AG04449 (cell line): ENCODE measurements at regions of chr12 and their contacts with region 1.

Region 1: GRCh38 chr12:2853626-2854025 is 3.2 kb downstream of the TEX52 start:
- DNase-seq: no peak
- H3K4me3 ChIP-seq: no peak overlapping the region
- CTCF ChIP-seq: peak; percentile 94

Region 2: DNA sequence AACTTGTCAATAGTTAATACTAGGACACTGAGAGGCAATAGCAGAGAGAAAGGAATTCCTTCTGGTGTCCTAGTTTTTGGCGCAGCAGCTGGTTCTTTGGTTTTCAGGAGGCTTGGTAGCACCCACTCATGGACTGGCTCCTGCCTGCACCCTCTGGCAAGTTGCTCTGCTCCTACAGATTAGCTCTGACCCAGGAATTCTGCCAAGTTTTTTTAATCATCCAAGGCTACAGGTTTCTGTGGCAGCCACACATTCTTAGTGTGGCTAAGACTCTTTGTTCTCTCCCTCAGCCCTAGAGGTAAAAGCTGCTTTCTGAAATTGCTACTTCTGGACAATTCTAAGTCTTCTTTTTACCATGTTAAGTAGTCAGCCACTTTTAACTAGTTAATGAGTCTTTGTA is 130.8 kb before region 1 on chr12:
- CTCF ChIA-PET with region 1: no interaction called
- POLR2A ChIA-PET with region 1: no interaction called
- DNase-seq: no peak
- H3K4me3 ChIP-seq: no peak overlapping the region
- CTCF ChIP-seq: no peak

Region 3: DNA sequence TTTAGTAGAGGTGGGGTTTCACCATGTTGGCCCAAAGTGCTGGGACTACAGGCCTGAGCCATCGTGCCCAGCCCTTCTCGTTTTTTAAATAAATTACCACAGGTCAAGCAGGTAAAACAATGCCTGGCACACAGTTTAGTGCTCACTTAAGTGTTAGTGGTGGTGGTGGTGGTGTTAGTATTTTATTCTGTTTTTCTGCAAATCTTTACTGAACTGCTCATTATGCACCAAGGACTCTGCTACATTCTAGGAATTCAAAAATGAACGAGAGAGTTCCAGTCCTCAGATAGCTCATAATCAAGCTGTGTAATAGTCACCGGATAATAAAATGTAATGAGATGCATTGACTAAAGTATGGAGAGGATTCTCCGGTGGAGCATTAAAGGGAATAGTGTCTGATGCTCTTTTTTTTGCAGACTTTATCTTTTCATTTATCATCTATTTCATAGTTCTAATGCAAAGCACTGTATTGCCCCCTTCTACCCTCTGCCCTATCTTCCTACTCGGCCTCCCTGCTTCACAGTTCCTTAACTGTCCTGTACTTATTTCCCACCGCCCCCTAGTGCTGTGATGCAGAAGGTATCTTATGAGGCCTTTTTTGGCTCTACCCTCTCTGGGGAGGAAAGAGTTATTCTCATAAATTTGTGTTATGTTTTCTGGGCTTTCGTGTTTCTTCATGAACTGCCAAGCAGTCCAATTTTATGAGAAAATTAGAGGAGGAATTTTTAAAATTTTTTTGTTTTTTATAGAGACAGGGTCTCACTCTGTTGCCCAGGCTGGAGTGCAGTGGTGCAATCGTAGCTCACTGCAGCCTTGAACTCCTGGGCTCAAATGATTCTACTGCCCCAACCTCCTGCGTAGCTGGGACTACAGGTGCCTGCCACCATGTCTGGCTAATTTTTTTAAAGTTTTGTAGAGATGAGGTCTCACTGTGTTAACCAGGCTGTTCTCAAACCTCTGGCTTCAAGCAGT is 40.1 kb before region 1 on chr12:
- CTCF ChIA-PET with region 1: no interaction called
- POLR2A ChIA-PET with region 1: no interaction called
- DNase-seq: peak; percentile 26
- H3K4me3 ChIP-seq: peak overlapping the region; percentile 72
- CTCF ChIP-seq: peak; percentile 73

Region 4: DNA sequence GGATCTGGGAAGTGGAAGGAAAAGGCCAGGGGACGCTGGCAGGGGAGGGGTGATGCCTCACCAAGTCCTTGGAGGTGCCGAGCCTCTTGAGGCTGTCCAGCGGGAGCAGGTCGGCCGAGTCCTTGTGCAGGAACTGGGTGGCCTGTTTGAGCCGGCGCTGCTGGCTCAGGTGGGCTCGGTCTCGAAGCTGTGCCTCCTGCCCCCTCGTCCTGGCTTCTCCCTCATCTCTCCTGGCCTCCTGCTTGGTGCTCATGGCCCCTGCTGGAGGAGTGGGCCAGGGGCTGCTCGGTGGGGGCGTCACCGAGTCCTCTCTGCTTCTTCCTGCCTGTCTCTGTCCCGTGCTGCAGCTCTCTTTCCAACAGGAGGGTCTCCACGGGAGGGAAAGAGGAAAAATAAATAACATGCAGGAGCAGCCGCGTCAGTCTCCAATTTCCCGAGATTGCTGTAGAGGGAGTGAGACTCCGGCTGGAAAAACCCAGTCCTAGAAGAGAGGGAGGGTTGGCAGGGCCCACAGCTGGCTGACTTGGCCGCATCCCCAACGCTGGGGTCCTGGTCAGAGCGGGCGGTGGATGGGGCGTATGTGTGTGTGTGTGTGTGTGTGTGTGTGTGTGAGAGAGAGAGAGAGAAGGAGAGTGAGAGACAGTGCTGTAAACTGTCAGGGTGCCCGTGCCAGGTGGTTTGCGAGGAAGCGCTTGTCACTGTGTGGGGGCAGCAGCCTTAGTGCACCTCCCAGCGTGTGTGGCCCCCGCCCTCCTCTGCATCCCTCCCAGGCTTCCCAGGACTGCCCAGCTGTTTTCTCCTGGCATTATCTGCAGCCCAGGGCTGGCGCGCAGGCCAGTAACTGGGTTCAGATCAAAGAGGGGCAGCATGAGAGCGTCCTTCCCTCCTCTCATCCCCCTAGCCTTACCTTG is 18.8 kb before region 1 on chr12 and contains the start of gene NRIP2:
- CTCF ChIA-PET with region 1: interaction called, 90 read pairs
- POLR2A ChIA-PET with region 1: no interaction called
- DNase-seq: no peak
- H3K4me3 ChIP-seq: no peak within 1 kb of the TSS; the same call in 1 of the 2 replicates
- CTCF ChIP-seq: no peak

Region 5: DNA sequence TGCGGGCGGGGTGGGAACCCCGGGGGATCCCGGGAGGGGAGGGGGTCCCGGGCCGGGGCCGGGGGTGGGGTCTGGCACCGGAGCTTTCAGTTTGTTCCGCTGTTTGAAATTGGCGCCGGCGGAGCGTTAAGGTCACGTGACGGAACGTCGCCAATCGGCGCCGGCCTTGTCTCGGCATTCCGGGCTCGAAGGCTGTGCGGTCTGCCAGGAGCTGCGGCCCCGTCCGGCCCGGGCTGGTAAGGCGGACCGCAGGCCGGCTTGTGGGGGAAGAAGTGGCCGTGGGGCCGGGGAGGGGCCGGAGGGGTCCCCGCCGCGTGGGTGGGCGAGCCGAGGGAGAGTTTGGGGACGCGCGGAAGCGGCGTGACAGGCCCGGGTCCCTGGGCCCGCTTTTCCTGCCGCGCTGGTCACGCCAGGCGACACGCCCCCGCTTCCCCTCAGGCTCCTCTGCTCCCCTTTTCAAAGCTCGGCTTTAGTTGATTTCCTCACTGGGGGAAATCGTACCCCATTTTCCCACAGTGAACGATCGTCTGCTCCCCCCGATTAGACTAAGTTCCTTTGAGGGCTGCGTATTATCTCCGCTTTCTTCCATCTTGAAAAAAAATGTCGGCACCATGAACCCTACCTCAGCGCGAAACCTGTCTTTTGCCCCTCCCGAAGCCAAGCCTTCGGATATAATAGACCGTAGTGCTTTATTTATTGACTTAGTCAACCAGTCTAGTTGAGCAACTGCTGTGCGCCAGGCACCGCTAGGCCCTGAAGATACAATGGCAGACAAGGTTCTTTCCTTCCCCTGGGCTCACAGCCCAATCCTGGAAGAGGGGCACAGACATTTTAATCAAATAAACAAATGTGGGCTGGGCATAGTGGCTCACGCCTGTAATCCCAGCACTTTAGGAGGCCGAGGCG is 23.7 kb after region 1 on chr12 and contains the starts of genes FOXM1 and RHNO1:
- CTCF ChIA-PET with region 1: interaction called, 17 read pairs
- POLR2A ChIA-PET with region 1: no interaction called
- DNase-seq: no peak
- H3K4me3 ChIP-seq: peak within 1 kb of the TSS; percentile 76
- CTCF ChIP-seq: peak; percentile 26

Region 6: DNA sequence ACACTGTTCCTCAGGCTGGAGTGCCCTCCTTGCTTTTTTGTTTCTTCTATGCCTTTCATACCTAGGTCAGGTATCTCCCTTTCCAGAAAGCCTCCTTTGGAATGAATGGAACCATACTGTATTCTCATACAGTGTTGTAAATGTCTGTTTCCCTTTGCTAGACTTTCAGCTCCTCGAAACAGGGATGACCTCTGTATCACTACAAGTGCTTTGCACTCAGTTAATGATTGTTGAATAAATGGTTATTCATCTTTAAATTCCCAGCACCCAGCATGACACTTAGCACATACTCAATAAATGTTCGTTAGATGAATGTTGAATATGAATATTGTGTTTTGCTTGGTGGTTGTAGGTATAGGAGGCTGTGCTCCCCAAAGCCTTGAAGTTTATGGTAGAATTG is 31.2 kb after region 1 on chr12:
- CTCF ChIA-PET with region 1: interaction called, 17 read pairs
- POLR2A ChIA-PET with region 1: no interaction called
- DNase-seq: no peak
- H3K4me3 ChIP-seq: no peak overlapping the region
- CTCF ChIP-seq: no peak

Region 7: GRCh38 chr12:2944401-2945047 is 90.9 kb after region 1 on chr12:
- CTCF ChIA-PET with region 1: interaction called, 19 read pairs
- POLR2A ChIA-PET with region 1: no interaction called
- DNase-seq: no peak
- H3K4me3 ChIP-seq: no peak overlapping the region
- CTCF ChIP-seq: peak; percentile 67

Region 8: DNA sequence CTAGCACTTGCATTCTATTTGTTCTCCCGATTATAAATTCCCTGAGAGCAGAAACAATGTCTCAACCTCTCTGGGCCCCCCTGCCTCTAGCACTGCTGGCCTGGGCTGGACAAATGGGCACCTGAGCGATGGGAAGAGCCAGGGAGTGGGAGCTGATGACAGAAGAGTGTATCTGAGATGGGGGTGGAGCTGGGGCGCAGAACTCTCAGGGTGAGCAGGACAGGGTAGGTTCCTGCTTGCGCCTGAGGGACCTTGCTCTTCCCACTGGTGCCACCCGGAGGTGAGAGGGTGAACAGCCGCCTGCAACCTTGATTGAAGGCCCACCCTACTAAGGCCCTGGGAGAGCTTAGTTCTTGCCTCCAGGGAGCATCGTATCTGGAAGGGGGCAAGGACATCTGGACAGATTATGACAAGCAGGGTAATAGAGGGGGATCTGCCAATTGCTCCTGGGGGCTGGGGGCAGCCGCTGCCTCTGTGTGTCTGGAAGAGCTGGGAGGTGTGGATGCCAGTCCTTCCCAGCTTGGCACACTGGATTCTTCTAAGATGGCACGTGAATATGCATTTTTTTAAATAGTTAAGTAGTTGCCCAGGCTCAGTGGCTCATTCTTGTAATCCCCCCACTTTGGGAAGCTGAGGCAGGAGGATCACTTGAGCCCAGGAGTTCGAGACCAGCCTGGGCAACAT is 180.6 kb after region 1 on chr12:
- CTCF ChIA-PET with region 1: interaction called, 27 read pairs
- POLR2A ChIA-PET with region 1: no interaction called
- DNase-seq: peak; percentile 17
- H3K4me3 ChIP-seq: no peak overlapping the region
- CTCF ChIP-seq: peak; percentile 88

Region 9: GRCh38 chr12:3041558-3042164 is 188.0 kb after region 1 on chr12:
- CTCF ChIA-PET with region 1: interaction called, 16 read pairs
- POLR2A ChIA-PET with region 1: no interaction called
- DNase-seq: no peak
- H3K4me3 ChIP-seq: no peak overlapping the region
- CTCF ChIP-seq: peak; percentile 83